ENCODE measurements at regions of chr13 and their contacts with region 1.

Region 1: DNA sequence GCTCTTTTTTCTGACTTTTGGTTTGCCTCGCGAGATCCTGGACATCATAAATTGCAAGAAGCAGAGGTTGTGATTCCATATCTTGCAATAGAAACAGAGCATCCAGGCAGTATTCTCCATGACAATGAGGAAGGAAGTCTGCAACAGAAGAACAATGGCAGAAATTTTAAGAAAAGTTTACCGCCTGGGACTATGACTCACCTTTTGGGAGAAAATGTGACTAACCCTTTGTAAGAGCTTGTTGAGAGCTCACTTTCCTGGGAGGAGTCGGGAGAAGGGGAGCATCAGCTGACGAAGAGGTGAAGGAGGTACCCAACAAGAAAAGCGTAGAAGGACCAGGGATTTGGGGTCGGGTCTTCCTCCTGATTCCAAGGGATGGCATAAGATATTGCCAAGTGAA is 34.3 kb upstream of the TNFSF11 start:
- DNase-seq: peak; percentile 79
- ATAC-seq: peak; percentile 93
- H3K4me3 ChIP-seq: no peak overlapping the region
- H3K27ac ChIP-seq: peak overlapping the region; percentile 32; the same call in 1 of the 2 replicates
- H3K4me1 ChIP-seq: peaks cover 14% of the 10 kb centered on the region; the same call in 1 of the 2 replicates
- H3K27me3 ChIP-seq: no peaks in the 10 kb centered on the region
- CTCF ChIP-seq: no peak

Region 2: DNA sequence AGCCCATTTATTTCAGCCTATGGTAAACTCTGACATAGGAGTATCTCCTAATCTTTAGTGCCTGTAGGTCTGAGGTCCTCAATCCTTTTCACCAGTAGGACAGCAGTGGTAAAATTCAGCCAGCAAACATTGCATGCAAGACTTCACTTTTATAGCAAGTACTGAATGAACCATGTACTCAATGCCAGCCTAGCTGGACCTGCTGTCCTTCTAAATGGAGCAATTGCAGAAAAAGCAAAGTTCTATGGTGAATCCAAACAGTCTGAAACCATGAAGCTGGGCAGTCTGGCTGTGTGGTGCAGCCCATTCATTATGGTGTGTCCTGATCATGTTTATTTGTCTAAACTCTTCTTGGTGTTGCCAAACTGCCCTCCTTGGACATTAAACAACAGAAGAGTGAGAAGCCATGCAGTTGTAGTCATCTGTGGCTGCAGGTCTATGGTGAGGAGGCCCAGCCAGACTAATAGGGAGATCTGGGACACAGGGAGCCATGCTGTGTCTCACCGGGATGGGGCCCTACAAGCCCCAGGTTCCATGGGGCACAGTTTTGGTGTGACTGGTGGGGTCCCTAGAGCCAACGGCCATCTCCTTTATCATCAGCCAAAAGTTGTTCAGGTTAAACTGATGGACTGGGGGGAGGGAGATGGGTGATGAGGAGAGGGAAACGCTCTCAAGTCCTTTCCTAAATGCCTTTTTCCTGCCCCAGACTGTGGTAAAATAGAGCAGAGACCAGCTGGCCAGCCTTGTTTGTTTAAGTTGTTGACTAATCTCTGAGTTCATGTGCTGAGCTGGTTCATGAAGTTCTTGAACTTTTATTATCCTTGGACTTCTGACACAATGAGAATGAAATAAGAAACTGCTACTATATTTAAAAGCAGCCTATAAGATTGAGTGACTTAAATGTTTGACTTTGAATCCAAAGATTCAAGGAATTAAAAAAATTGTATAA is 13.7 kb after region 1 on chr13:
- CTCF ChIA-PET with region 1: no interaction called
- POLR2A ChIA-PET with region 1: no interaction called
- intact Hi-C with region 1: loop called (anchors 2 kb)
- DNase-seq: peak; percentile 76
- ATAC-seq: peak; percentile 98
- H3K4me3 ChIP-seq: no peak overlapping the region
- H3K27ac ChIP-seq: peak overlapping the region; percentile 59
- H3K4me1 ChIP-seq: peaks cover 22% of the 10 kb centered on the region
- H3K27me3 ChIP-seq: no peaks in the 10 kb centered on the region
- CTCF ChIP-seq: no peak

Measured in PC-3 (cell line).